Activated CD4-positive, alpha-beta T cell treated with anti-CD3 and anti-CD28 coated beads for 36 hours (primary cell): ENCODE measurements at regions of chr14 and their contacts with region 1.

Region 1: DNA sequence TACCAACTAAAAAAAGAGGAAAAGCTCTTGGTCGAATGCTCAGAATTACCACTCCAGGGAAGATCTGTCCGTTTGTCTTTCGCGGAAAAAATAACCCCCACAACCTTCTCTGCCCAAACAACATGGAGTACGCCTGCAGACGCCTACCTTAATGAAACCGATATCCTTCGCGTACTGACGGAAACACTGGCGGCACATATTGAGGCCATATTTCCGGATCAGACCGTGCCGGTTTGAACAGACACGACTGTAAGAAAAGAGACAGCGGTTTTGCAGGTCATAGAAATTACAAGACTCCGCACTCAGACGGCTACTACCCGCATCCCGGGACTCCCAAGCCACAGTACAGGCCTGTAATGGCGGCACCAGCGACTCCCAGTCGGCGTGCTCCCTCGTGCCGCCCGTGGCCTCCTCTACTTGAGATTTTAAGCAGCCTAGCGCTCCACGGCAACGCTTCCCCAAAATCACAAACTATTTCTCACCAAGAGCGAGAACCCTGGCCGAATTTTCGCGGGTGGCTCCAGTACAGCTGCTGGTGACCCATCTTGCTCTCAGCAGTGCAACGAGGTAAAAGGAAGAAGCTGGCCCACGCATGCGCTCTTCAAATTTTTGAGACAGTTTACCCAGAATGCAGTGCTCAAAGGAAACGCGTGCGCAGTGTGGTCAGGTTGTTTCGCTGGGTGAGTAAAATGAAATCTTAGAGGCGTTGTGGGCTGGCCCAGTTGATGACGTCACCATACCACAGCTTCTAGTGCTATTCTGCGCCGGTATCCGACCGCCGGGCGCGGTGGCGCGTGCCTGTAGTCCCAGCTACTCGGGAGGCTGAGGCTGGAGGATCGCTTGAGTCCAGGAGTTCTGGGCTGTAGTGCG is at the start of gene RPS29:
- DNase-seq: peak; percentile 99
- ATAC-seq: peak; percentile 84
- H3K4me3 Mint-ChIP-seq: peak within 1 kb of the TSS; percentile 92
- H3K27ac Mint-ChIP-seq: peak within 1 kb of the TSS; percentile 96
- H3K4me1 Mint-ChIP-seq: peaks cover 40% of the 10 kb centered on the region
- H3K27me3 Mint-ChIP-seq: no peaks in the 10 kb centered on the region
- total RNA-seq, gene RPS29: 481 to 1,987 TPM

Region 2: DNA sequence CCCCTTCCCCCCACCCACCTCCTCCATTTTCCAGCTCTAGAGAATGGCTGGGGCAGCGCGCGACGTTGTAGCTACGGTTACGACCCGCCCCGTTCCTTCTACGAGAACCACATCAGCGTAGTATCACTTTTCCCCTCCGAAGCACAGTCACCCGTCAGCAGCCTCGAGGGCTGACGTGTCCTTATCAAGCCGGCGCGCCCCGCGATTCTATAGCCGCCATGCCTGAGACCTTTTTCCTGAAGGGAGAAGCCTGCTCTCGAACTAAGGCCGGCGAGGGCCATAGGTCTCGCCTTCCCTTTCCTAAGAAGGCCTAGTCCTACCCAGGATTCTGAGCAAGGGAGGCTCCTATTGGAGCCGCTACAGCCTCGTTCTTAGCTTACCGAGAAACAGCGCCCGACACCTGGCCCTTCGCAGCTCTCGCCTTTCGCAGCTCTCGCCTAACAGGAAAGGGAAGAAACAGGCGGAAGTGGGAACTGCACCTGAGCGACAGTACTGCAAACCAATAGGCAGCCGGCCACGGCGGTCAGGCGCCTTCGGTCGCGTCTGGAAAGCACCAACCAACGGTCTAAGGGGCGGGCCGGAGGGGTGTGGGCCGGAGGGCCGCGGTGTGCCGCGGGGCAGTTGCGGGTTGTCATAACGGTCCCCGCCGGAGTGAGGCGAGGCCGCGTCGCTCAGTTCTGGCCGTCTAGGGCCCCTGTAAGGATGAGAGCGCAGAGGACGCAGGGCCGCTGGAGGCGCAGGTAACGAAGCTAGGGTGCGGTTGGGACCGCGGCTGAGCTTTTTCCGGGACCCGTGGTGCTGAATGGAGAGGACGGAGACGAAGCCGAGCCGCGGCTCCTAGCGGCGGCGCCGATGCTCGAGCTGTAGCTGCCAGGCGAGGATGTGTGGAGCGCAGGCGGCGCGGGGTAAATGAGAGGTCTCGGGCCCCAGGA is 34.4 kb after region 1 on chr14 and contains the starts of genes MGAT2 and RPL36AL:
- CTCF ChIA-PET with region 1: interaction called, 15 read pairs
- POLR2A ChIA-PET with region 1: interaction called, 18 read pairs
- intact Hi-C with region 1: loop called (anchors 1 kb)
- DNase-seq: peak; percentile 97
- ATAC-seq: peak; percentile 90
- H3K4me3 Mint-ChIP-seq: peak within 1 kb of the TSS; percentile 93
- H3K27ac Mint-ChIP-seq: peak within 1 kb of the TSS; percentile 97
- H3K4me1 Mint-ChIP-seq: peaks cover 51% of the 10 kb centered on the region
- H3K27me3 Mint-ChIP-seq: no peaks in the 10 kb centered on the region
- total RNA-seq, gene MGAT2: 23.8 to 32.2 TPM
- total RNA-seq, gene RPL36AL: 272 to 309 TPM

Region 3: GRCh38 chr14:49732896-49733295 is 146.9 kb after region 1 on chr14:
- CTCF ChIA-PET with region 1: no interaction called
- POLR2A ChIA-PET with region 1: no interaction called
- intact Hi-C with region 1: no loop called
- DNase-seq: no peak
- ATAC-seq: no peak
- H3K4me3 Mint-ChIP-seq: no peak overlapping the region
- H3K27ac Mint-ChIP-seq: no peak overlapping the region
- H3K4me1 Mint-ChIP-seq: no peaks in the 10 kb centered on the region
- H3K27me3 Mint-ChIP-seq: no peaks in the 10 kb centered on the region

Region 4: DNA sequence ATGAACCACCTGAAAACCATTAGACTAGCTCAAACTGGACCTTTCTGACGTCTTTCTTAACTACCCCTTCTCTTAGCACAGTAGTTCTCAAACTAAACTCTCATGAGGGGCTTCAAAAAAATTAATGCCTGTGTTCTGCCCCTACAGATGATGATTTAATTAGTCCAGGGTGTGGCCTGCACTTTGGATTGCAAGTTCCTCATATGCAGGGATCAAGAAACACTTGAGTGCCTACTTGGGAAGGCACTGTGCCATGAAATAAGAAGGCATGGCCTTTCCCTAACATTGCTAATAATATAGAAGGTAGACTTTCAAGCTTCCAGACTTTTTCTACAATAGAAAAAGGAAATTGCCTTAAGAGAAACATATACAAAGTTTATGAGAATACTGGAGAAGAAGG is 159.2 kb after region 1 on chr14:
- CTCF ChIA-PET with region 1: no interaction called
- POLR2A ChIA-PET with region 1: no interaction called
- intact Hi-C with region 1: no loop called
- DNase-seq: no peak
- ATAC-seq: no peak
- H3K4me3 Mint-ChIP-seq: no peak overlapping the region
- H3K27ac Mint-ChIP-seq: no peak overlapping the region
- H3K4me1 Mint-ChIP-seq: no peaks in the 10 kb centered on the region
- H3K27me3 Mint-ChIP-seq: no peaks in the 10 kb centered on the region